Sciatic nerve (tissue), 2 donors: ENCODE measurements at regions of chr2 and their contacts with region 1.

Region 1: GRCh38 chr2:125564471-125564870 is 1091.5 kb upstream of the GYPC start:
- DNase-seq: no peak
- ATAC-seq: no peak

Region 2: GRCh38 chr2:123717636-123718334 is 1846.7 kb before region 1 on chr2:
- intact Hi-C with region 1: loop called (anchors 5 kb)
- DNase-seq: no peak
- ATAC-seq: no peak

Region 3: GRCh38 chr2:125364192-125364983 is 200.1 kb before region 1 on chr2:
- intact Hi-C with region 1: no loop called
- DNase-seq: no peak
- ATAC-seq: no peak

Region 4: GRCh38 chr2:125576558-125576957 is 12.1 kb after region 1 on chr2:
- intact Hi-C with region 1: no loop called
- DNase-seq: no peak
- ATAC-seq: no peak